ENCODE measurements at regions of chr15 and their contacts with region 1.

Region 1: GRCh38 chr15:38683382-38684242 is 119.0 kb upstream of the RASGRP1 start:
- DNase-seq: peak; percentile 43
- H3K4me3 Mint-ChIP-seq: no peak overlapping the region
- H3K27ac Mint-ChIP-seq: no peak overlapping the region
- H3K4me1 Mint-ChIP-seq: no peaks in the 10 kb centered on the region
- H3K27me3 Mint-ChIP-seq: no peaks in the 10 kb centered on the region
- CTCF ChIP-seq: peak; percentile 31

Region 2: GRCh38 chr15:37995461-37996347 is 687.9 kb before region 1 on chr15:
- CTCF ChIA-PET with region 1: no interaction called
- intact Hi-C with region 1: loop called (anchors 10 kb)
- DNase-seq: no peak
- H3K4me3 Mint-ChIP-seq: no peak overlapping the region
- H3K27ac Mint-ChIP-seq: no peak overlapping the region
- H3K4me1 Mint-ChIP-seq: no peaks in the 10 kb centered on the region
- H3K27me3 Mint-ChIP-seq: no peaks in the 10 kb centered on the region
- CTCF ChIP-seq: peak; percentile 22

Region 3: DNA sequence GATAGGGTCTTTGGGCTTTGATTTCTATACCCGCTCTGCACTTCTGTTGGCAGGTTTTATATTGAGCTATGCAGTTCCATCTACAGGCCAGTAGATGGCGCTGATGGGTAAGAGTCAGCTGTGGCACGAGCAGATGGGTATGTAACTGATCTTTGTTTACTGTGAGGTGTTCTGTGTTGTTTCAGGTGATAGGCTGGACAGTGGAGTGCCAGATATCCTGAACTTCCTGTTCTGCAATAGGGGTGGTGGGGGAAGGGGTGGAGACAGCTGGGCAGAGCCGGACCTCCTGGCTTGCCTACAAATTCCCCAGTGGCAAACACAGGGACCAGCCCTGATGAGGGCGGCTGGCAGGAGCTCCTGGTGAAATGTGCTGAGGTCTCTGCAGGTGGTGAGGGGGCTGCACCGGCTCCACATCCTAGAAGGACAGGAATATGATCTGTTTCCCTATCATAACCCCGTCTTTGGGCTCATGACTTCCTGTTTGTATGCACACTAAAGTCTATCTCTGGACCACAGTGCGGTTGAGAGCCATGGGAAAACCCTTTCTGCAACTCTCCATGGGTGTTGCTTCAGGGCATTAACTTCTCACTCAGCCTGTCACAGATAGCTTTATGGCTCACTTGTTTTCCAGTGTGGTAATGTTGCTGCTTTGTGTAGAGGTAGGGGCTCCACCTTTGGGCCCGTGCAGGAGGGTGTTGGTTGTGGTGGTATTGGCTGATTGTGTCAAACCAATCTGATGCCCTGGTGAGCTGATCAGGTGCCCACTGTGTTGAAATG is 243.1 kb before region 1 on chr15:
- CTCF ChIA-PET with region 1: interaction called, 4 read pairs
- intact Hi-C with region 1: loop called (anchors 1 kb)
- DNase-seq: peak; percentile 41
- H3K4me3 Mint-ChIP-seq: no peak overlapping the region
- H3K27ac Mint-ChIP-seq: no peak overlapping the region
- H3K4me1 Mint-ChIP-seq: no peaks in the 10 kb centered on the region
- H3K27me3 Mint-ChIP-seq: no peaks in the 10 kb centered on the region
- CTCF ChIP-seq: peak; percentile 45

Region 4: GRCh38 chr15:38474155-38474757 is 209.4 kb before region 1 on chr15:
- CTCF ChIA-PET with region 1: no interaction called
- intact Hi-C with region 1: loop called (anchors 2 kb)
- DNase-seq: peak; percentile 13
- H3K4me3 Mint-ChIP-seq: no peak overlapping the region
- H3K27ac Mint-ChIP-seq: no peak overlapping the region
- H3K4me1 Mint-ChIP-seq: no peaks in the 10 kb centered on the region
- H3K27me3 Mint-ChIP-seq: no peaks in the 10 kb centered on the region
- CTCF ChIP-seq: peak; percentile 21

Region 5: GRCh38 chr15:38563723-38564519 is 119.7 kb before region 1 on chr15:
- CTCF ChIA-PET with region 1: no interaction called
- intact Hi-C with region 1: loop called (anchors 5 kb)
- DNase-seq: peak; percentile 82
- H3K4me3 Mint-ChIP-seq: peak overlapping the region; percentile 77
- H3K27ac Mint-ChIP-seq: no peak overlapping the region
- H3K4me1 Mint-ChIP-seq: peaks cover 9% of the 10 kb centered on the region
- H3K27me3 Mint-ChIP-seq: no peaks in the 10 kb centered on the region
- CTCF ChIP-seq: peak; percentile 63